Mammary epithelial cell (primary cell): ENCODE measurements at regions of chr6 and their contacts with region 1.

Region 1: GRCh38 chr6:116287689-116288282 is 8.1 kb upstream of the TSPYL1 start:
- DNase-seq: no peak
- H3K4me3 ChIP-seq: no peak overlapping the region
- H3K27ac ChIP-seq: no peak overlapping the region
- H3K4me1 ChIP-seq: no peaks in the 10 kb centered on the region
- H3K27me3 ChIP-seq: no peaks in the 10 kb centered on the region
- CTCF ChIP-seq: peak; percentile 88 to 96

Region 2: DNA sequence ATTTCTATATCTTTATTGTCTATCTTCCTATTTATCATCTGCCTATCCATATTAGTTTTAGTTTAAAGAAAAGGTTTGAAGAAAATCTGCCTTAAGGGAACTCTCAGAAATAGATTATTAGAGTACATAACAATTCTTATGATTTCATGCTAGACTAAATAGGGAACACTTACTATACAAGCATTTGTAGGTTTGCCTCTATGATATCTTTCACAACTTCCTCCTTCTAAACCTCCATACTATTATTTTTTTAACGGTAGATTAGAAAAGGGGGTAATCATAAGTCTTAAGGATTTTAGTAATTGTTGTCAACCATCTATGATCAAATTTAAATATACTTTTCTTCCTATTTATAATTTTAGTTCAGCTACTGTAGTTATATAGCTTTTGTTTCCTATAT is 71.3 kb after region 1 on chr6:
- CTCF ChIA-PET with region 1: no interaction called
- dilution Hi-C with region 1: no loop called
- in situ Hi-C with region 1: no loop called
- intact Hi-C with region 1: no loop called
- DNase-seq: no peak
- H3K4me3 ChIP-seq: no peak overlapping the region
- H3K27ac ChIP-seq: no peak overlapping the region
- H3K4me1 ChIP-seq: peaks cover under 1% of the 10 kb centered on the region
- H3K27me3 ChIP-seq: no peaks in the 10 kb centered on the region
- CTCF ChIP-seq: no peak

Region 3: GRCh38 chr6:116371120-116371917 is 83.5 kb after region 1 on chr6:
- CTCF ChIA-PET with region 1: no interaction called
- dilution Hi-C with region 1: no loop called
- in situ Hi-C with region 1: no loop called
- intact Hi-C with region 1: loop called (anchors 1 kb)
- DNase-seq: peak; percentile 92
- H3K4me3 ChIP-seq: peak overlapping the region; percentile 83 to 93 (median 90)
- H3K27ac ChIP-seq: peak overlapping the region; percentile 96
- H3K4me1 ChIP-seq: peaks cover 51% of the 10 kb centered on the region
- H3K27me3 ChIP-seq: no peaks in the 10 kb centered on the region
- CTCF ChIP-seq: no peak

Region 4: GRCh38 chr6:116426551-116426950 is 138.8 kb after region 1 on chr6:
- CTCF ChIA-PET with region 1: no interaction called
- dilution Hi-C with region 1: no loop called
- in situ Hi-C with region 1: loop called in 1 of 2 experiments (anchors 25 kb)
- intact Hi-C with region 1: loop called (anchors 5 kb)
- DNase-seq: peak; percentile 92
- H3K4me3 ChIP-seq: no peak overlapping the region
- H3K27ac ChIP-seq: peak overlapping the region; percentile 85
- H3K4me1 ChIP-seq: peaks cover 14% of the 10 kb centered on the region
- H3K27me3 ChIP-seq: no peaks in the 10 kb centered on the region
- CTCF ChIP-seq: no peak

Region 5: DNA sequence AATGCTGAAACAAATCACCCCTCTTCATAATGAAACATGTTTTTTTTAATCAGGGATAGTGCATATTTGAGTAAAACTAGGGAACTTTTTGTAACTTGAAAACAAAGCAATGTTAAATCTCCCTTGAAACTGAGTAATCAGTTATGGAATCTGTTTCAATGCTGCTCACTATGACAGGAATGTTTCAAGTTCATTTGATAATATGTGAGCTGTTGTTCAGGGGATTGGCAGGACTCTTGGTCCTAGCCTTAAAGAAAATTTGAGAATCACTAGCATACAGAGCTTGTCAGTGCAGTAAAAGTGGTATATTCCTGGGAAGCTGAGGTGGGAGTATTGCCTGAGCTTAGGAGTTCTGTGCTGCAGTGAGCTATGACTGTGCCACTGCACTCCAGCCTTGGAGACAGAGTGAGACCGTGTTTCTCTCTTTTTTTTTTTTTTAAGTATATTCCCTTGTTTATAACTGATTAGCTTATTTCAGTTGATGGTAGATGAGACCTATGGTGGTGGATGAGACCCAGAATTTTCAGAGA is 151.8 kb after region 1 on chr6:
- CTCF ChIA-PET with region 1: no interaction called
- dilution Hi-C with region 1: no loop called
- in situ Hi-C with region 1: no loop called
- intact Hi-C with region 1: no loop called
- DNase-seq: no peak
- H3K4me3 ChIP-seq: no peak overlapping the region
- H3K27ac ChIP-seq: no peak overlapping the region
- H3K4me1 ChIP-seq: no peaks in the 10 kb centered on the region
- H3K27me3 ChIP-seq: no peaks in the 10 kb centered on the region
- CTCF ChIP-seq: no peak

Region 6: GRCh38 chr6:116531675-116532570 is 244.1 kb after region 1 on chr6:
- CTCF ChIA-PET with region 1: no interaction called
- dilution Hi-C with region 1: no loop called
- in situ Hi-C with region 1: no loop called
- intact Hi-C with region 1: loop called (anchors 1 kb)
- DNase-seq: peak; percentile 42
- H3K4me3 ChIP-seq: no peak overlapping the region
- H3K27ac ChIP-seq: no peak overlapping the region
- H3K4me1 ChIP-seq: peaks cover 27% of the 10 kb centered on the region
- H3K27me3 ChIP-seq: no peaks in the 10 kb centered on the region
- CTCF ChIP-seq: peak; percentile 68 to 72